HCT116 (cell line): ENCODE measurements at regions of chr2 and their contacts with region 1.

Region 1: DNA sequence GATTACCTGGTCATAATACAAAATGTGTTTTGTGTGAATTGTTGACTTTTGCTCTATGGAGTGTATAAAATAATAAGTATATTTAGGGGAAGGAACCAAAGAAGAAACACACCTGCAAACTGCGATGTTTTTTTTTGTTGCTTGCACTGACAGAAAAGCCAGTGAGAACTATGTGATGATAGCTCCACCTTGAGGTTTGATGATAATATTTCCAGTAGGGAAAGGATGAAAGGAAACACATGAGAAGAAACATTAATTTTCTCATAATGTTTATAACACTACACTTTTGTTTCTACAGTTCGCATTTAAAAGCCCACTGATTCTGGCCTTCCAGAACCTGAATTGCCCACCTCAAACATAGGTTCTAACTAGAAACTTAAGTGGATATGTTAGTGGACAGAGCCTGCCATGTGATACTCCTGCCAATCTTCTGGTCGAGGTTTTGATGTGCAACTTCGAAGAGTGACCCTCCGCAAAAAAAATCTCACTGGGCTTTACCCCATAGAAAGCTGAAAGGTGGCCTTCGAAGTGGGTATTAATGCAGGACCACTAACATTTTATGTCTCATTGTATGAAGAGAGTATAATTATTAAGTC is 476.4 kb upstream of the SPHKAP start:
- DNase-seq: peak; percentile 24
- ATAC-seq: peak; percentile 68; the same call in 1 of the 2 replicates
- H3K4me3 ChIP-seq: no peak overlapping the region
- H3K27ac ChIP-seq: no peak overlapping the region
- H3K4me1 ChIP-seq: no peaks in the 10 kb centered on the region
- H3K27me3 ChIP-seq: no peaks in the 10 kb centered on the region
- CTCF ChIP-seq: peak; percentile 31 to 78 (median 57); a peak in 5 of 6 replicates
- POLR2A ChIP-seq: no peak
- RAD21 ChIP-seq: peak; percentile 91

Region 2: GRCh38 chr2:227939271-227940027 is 718.5 kb before region 1 on chr2:
- CTCF ChIA-PET with region 1: no interaction called
- POLR2A ChIA-PET with region 1: no interaction called
- RAD21 ChIA-PET with region 1: no interaction called
- intact Hi-C with region 1: loop called (anchors 1 kb)
- DNase-seq: peak; percentile 60
- ATAC-seq: peak; percentile 95
- H3K4me3 ChIP-seq: no peak overlapping the region
- H3K27ac ChIP-seq: no peak overlapping the region
- H3K4me1 ChIP-seq: peaks cover 0 to 3% of the 10 kb centered on the region in 2 experiments; a peak in 1 of 4 replicates
- H3K27me3 ChIP-seq: no peaks in the 10 kb centered on the region
- CTCF ChIP-seq: peak; percentile 58 to 86 (median 76); a peak in 5 of 6 replicates
- POLR2A ChIP-seq: no peak
- RAD21 ChIP-seq: peak; percentile 75

Region 3: DNA sequence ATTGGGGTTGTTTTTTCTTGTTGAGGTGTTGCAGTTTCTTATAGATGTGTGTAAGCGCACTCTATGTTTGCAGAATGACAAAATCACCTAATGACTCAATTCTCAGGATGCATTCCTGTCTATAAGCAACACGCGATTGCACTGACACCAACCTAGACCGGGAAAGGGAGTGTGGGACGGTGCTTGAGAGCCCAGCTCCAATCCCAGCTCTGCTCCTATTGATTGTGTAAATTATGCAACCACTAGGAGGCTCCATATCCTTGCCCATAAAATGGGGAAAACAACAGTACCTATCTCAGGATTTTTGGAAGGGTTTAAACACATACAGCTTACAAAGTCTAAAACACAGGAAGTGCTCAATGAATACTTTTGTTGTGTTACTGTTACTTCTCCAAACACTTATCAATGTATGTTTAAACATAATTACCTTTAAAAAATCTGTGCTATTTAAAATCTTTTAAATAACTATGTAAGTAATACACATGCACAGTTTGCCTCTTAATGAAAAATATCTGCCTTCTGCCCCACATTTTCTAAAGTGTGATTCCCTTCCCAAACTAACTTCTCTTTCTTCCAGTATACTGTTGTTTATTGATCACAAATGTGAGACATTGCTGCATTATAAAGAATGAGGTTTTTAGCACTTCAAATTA is 608.9 kb before region 1 on chr2:
- CTCF ChIA-PET with region 1: interaction called, 11 read pairs
- POLR2A ChIA-PET with region 1: no interaction called
- RAD21 ChIA-PET with region 1: no interaction called
- intact Hi-C with region 1: loop called (anchors 2 kb)
- DNase-seq: peak; percentile 61
- ATAC-seq: peak; percentile 100
- H3K4me3 ChIP-seq: no peak overlapping the region
- H3K27ac ChIP-seq: no peak overlapping the region
- H3K4me1 ChIP-seq: peaks cover 0 to 3% of the 10 kb centered on the region in 2 experiments; a peak in 1 of 4 replicates
- H3K27me3 ChIP-seq: no peaks in the 10 kb centered on the region
- CTCF ChIP-seq: peak; percentile 69 to 76 (median 70)
- POLR2A ChIP-seq: no peak
- RAD21 ChIP-seq: peak; percentile 89

Region 4: DNA sequence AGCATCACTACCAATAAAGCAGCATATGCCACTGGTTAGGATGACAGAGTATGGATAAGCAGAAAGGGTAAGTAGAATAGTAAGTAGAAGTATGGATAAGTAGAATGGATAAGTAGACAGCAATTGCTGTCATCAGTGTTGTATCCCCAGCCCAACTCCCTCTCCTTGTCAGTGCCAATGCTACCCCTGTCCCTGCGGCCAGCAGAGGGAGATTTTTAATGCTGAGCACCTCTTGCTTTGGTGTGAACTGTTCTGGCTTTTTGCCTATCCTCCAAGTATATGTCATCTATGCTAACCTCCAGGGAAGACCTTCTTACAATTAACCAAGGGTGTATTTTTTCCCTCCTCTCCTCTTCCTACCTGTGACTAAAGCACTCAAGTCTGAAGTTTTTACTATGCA is 339.7 kb before region 1 on chr2:
- CTCF ChIA-PET with region 1: interaction called, 4 read pairs
- POLR2A ChIA-PET with region 1: no interaction called
- RAD21 ChIA-PET with region 1: no interaction called
- intact Hi-C with region 1: loop called (anchors 1 kb)
- DNase-seq: peak; percentile 27
- ATAC-seq: peak; percentile 90
- H3K4me3 ChIP-seq: no peak overlapping the region
- H3K27ac ChIP-seq: no peak overlapping the region
- H3K4me1 ChIP-seq: no peaks in the 10 kb centered on the region
- H3K27me3 ChIP-seq: no peaks in the 10 kb centered on the region
- CTCF ChIP-seq: peak; percentile 34 to 75 (median 70); a peak in 5 of 6 replicates
- POLR2A ChIP-seq: no peak
- RAD21 ChIP-seq: peak; percentile 60

Region 5: GRCh38 chr2:228401065-228401912 is 256.6 kb before region 1 on chr2:
- CTCF ChIA-PET with region 1: no interaction called
- POLR2A ChIA-PET with region 1: no interaction called
- RAD21 ChIA-PET with region 1: no interaction called
- intact Hi-C with region 1: loop called (anchors 2 kb)
- DNase-seq: no peak
- ATAC-seq: peak; percentile 80
- H3K4me3 ChIP-seq: no peak overlapping the region
- H3K27ac ChIP-seq: no peak overlapping the region
- H3K4me1 ChIP-seq: no peaks in the 10 kb centered on the region
- H3K27me3 ChIP-seq: no peaks in the 10 kb centered on the region
- CTCF ChIP-seq: peak; percentile 32 to 47 (median 42); a peak in 4 of 6 replicates
- POLR2A ChIP-seq: no peak
- RAD21 ChIP-seq: peak; percentile 80

Region 6: GRCh38 chr2:228556717-228557116 is 101.2 kb before region 1 on chr2:
- CTCF ChIA-PET with region 1: no interaction called
- POLR2A ChIA-PET with region 1: no interaction called
- RAD21 ChIA-PET with region 1: no interaction called
- intact Hi-C with region 1: no loop called
- DNase-seq: no peak
- ATAC-seq: no peak
- H3K4me3 ChIP-seq: no peak overlapping the region
- H3K27ac ChIP-seq: no peak overlapping the region
- H3K4me1 ChIP-seq: no peaks in the 10 kb centered on the region
- H3K27me3 ChIP-seq: no peaks in the 10 kb centered on the region
- CTCF ChIP-seq: no peak
- POLR2A ChIP-seq: no peak
- RAD21 ChIP-seq: no peak